ENCODE measurements at regions of chr2 and their contacts with region 1.

Region 1: DNA sequence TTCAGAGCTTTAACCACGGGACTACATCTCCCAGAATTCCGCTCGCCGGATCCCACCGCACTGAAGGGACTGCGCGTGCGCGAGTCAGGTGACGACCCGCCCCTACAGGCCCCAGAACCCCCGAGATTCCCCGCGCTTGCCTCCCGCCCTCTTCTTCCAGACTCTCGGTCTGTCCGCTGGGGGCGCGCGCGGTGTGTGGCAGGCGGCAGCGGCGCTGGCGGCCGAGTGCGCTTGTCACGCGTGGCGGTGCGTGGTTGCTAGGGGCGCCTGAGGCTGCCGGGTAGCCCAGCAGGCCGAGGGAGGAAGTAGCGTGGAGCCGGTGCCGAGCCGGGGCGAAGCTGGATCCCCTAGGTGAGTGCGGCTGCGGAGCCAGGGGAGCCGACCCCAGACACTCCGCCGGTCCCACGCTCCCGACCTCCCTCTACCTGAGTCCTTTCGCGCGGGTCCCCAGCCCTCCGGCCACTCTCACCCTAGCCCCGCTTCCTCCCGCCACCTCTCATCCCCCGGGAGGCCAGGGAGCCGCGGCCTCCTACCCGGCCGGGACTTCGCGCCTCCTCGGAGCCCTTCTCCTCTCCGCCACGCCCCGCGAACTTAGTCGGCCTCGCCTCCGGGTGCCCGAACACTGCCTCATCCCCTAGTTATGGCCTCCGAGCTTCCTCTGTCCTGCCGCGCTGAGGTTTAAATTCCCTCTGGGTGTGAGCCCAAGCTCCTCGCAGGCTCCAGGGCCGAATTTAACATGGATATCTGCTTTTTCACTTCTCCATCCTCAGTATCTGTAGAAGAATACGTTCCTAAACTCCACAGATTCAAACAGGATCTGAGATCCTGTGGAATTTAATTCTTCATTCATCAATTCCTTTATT is at the start of gene TTLL4:
- DNase-seq: peak; percentile 98 to 99
- H3K4me3 ChIP-seq: peak within 1 kb of the TSS; percentile 100
- H3K4me3 Mint-ChIP-seq: peak within 1 kb of the TSS; percentile 97
- H3K27ac Mint-ChIP-seq: peak within 1 kb of the TSS; percentile 94
- H3K4me1 ChIP-seq: peaks cover 18% of the 10 kb centered on the region
- H3K4me1 Mint-ChIP-seq: peaks cover 13% of the 10 kb centered on the region
- H3K27me3 ChIP-seq: no peaks in the 10 kb centered on the region
- H3K27me3 Mint-ChIP-seq: no peaks in the 10 kb centered on the region
- CTCF ChIP-seq: peak; percentile 74 to 89
- total RNA-seq, gene TTLL4: 86.6 and 87.9 TPM in 2 replicates

Region 2: GRCh38 chr2:218671654-218672566 is 39.0 kb before region 1 on chr2 and contains the starts of genes RNF25 and STK36:
- CTCF ChIA-PET with region 1: interaction called, 7 read pairs
- POLR2A ChIA-PET with region 1: no interaction called
- intact Hi-C with region 1: loop called (anchors 2 kb)
- DNase-seq: peak; percentile 86 to 88
- H3K4me3 ChIP-seq: peak within 1 kb of the TSS; percentile 86
- H3K4me3 Mint-ChIP-seq: peak within 1 kb of the TSS; percentile 96
- H3K27ac Mint-ChIP-seq: peak within 1 kb of the TSS; percentile 91
- H3K4me1 ChIP-seq: peaks cover 11% of the 10 kb centered on the region; the same call in 1 of the 2 replicates
- H3K4me1 Mint-ChIP-seq: peaks cover 11% of the 10 kb centered on the region
- H3K27me3 ChIP-seq: no peaks in the 10 kb centered on the region
- H3K27me3 Mint-ChIP-seq: no peaks in the 10 kb centered on the region
- CTCF ChIP-seq: no peak
- total RNA-seq, gene RNF25: 30.5 and 32.1 TPM in 2 replicates
- total RNA-seq, gene STK36: 44.1 and 56.9 TPM in 2 replicates

Region 3: DNA sequence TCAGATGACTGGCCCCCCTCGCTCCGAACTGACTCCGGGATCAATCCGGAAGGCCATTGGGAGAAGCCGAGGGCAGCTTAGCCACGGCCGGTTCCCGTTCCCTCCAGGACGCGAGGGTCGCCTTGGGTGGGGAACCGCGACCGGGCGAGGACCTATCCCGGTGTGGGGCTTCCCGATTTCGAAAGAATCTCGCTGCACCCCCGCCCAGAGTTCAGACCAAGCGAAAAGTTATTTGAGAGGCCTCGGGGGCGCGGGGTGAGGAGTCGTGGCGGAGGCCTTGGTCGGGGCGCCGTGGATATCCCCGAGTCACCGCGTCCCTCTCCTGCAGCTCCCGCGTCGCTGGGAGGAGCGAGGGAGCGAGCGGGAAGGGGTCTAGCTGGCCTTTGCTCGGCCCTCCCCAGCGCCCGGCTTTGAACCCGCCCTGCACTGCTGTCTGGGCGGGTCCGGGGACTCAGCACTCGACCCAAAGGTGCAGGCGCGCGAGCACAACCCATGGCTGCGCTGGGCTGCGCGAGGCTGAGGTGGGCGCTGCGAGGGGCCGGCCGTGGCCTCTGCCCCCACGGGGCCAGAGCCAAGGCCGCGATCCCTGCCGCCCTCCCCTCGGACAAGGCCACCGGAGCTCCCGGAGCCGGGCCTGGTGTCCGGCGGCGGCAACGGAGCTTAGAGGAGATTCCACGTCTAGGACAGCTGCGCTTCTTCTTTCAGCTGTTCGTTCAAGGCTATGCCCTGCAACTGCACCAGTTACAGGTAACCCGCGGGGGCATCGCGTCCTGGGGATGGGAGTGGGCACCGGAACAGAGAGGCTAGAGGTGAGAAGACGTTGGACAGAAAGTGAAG is 71.0 kb after region 1 on chr2 and contains the start of gene CYP27A1:
- CTCF ChIA-PET with region 1: interaction called, 6 read pairs
- POLR2A ChIA-PET with region 1: interaction called, 5 read pairs
- intact Hi-C with region 1: loop called (anchors 2 kb)
- DNase-seq: peak; percentile 74
- H3K4me3 ChIP-seq: peak within 1 kb of the TSS; percentile 35
- H3K4me3 Mint-ChIP-seq: peak within 1 kb of the TSS; percentile 81
- H3K27ac Mint-ChIP-seq: peak within 1 kb of the TSS; percentile 38
- H3K4me1 ChIP-seq: peaks cover 15% of the 10 kb centered on the region; the same call in 1 of the 2 replicates
- H3K4me1 Mint-ChIP-seq: peaks cover 31% of the 10 kb centered on the region
- H3K27me3 ChIP-seq: no peaks in the 10 kb centered on the region
- H3K27me3 Mint-ChIP-seq: no peaks in the 10 kb centered on the region
- CTCF ChIP-seq: no peak
- total RNA-seq, gene CYP27A1: 20.9 and 26.8 TPM in 2 replicates

Region 4: GRCh38 chr2:218860950-218861381 is 150.0 kb after region 1 on chr2:
- CTCF ChIA-PET with region 1: interaction called, 5 read pairs
- POLR2A ChIA-PET with region 1: interaction called, 12 read pairs
- intact Hi-C with region 1: no loop called
- DNase-seq: peak; percentile 88 to 93
- H3K4me3 ChIP-seq: peak overlapping the region; percentile 43
- H3K4me3 Mint-ChIP-seq: peak overlapping the region; percentile 76
- H3K27ac Mint-ChIP-seq: no peak overlapping the region
- H3K4me1 ChIP-seq: peaks cover 43% of the 10 kb centered on the region
- H3K4me1 Mint-ChIP-seq: peaks cover 32% of the 10 kb centered on the region
- H3K27me3 ChIP-seq: peaks cover 6% of the 10 kb centered on the region
- H3K27me3 Mint-ChIP-seq: peaks cover 8% of the 10 kb centered on the region
- CTCF ChIP-seq: no peak

Region 5: GRCh38 chr2:219002395-219003266 is 291.7 kb after region 1 on chr2:
- CTCF ChIA-PET with region 1: interaction called, 10 read pairs
- POLR2A ChIA-PET with region 1: no interaction called
- intact Hi-C with region 1: no loop called
- DNase-seq: peak in 1 of 2 experiments; percentile 85
- H3K4me3 ChIP-seq: peak overlapping the region; percentile 67
- H3K4me3 Mint-ChIP-seq: peak overlapping the region; percentile 79
- H3K27ac Mint-ChIP-seq: no peak overlapping the region
- H3K4me1 ChIP-seq: peaks cover 25% of the 10 kb centered on the region
- H3K4me1 Mint-ChIP-seq: peaks cover 15% of the 10 kb centered on the region
- H3K27me3 ChIP-seq: no peaks in the 10 kb centered on the region
- H3K27me3 Mint-ChIP-seq: peaks cover 7% of the 10 kb centered on the region
- CTCF ChIP-seq: peak; percentile 48 to 77

Measured in Caco-2 (cell line).